GM12878 (cell line): ENCODE measurements at regions of chr10 and their contacts with region 1.

Region 1: DNA sequence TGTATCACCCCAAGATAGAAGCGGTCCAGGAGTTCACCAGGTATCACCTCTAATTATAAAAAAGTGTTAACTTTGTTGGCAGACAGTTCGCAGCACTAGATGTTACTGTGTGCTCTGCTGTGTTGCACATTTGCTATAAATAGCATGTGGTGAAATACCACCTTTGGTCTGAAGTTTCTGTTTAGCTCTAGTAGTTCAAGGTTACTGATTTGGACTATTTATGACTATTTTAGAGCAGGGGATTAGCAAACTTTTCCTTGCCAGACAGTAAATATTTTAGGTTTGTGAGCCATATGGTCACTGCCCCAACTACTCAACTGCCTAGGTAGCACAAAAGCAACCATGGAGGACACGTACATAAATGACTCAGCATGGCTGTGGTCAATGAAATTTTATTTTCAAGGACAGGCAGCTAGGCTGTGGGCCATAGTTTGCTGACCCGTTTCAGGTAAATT is 16.5 kb downstream of the DENND10 start:
- DNase-seq: peak; percentile 88
- ATAC-seq: peak; percentile 95
- H3K4me3 ChIP-seq: no peak overlapping the region; the same call in 1 of the 2 replicates
- H3K27ac ChIP-seq: peak overlapping the region; percentile 43
- H3K4me1 ChIP-seq: peaks cover 16% of the 10 kb centered on the region
- H3K27me3 ChIP-seq: no peaks in the 10 kb centered on the region
- CTCF ChIP-seq: no peak
- EP300 ChIP-seq: peak; percentile 66 to 74; a peak in 3 of 4 replicates
- POLR2A ChIP-seq: no peak
- RAD21 ChIP-seq: no peak

Region 2: GRCh38 chr10:118522791-118523498 is 597.5 kb before region 1 on chr10:
- CTCF ChIA-PET with region 1: no interaction called
- POLR2A ChIA-PET with region 1: no interaction called
- RAD21 ChIA-PET with region 1: no interaction called
- SMC1A ChIA-PET with region 1: no interaction called
- in situ Hi-C with region 1: no loop called
- intact Hi-C with region 1: no loop called
- DNase-seq: no peak
- ATAC-seq: no peak
- H3K4me3 ChIP-seq: no peak overlapping the region
- H3K27ac ChIP-seq: no peak overlapping the region
- H3K4me1 ChIP-seq: no peaks in the 10 kb centered on the region
- H3K27me3 ChIP-seq: no peaks in the 10 kb centered on the region
- CTCF ChIP-seq: no peak
- EP300 ChIP-seq: no peak
- POLR2A ChIP-seq: no peak
- RAD21 ChIP-seq: no peak

Region 3: DNA sequence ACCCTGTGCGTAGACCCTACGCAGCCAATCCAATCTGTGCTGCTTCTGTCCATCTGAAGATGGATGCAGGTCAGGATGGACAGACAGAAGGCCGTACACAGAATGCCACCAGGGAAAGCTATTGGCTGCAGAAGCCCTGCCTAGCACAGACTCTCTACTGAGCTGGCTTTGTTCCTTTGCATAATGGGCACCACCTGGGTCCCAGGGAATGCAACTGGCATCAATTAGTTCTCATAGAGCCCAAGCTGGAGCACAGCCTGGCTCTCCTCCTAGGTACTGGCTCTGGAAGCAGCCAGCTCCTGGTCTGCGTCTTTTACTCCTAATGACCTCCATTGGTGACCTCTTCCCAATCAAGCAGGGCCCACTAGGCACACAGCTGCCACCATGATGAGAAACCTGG is 338.9 kb before region 1 on chr10:
- CTCF ChIA-PET with region 1: no interaction called
- POLR2A ChIA-PET with region 1: no interaction called
- RAD21 ChIA-PET with region 1: no interaction called
- SMC1A ChIA-PET with region 1: no interaction called
- in situ Hi-C with region 1: no loop called
- intact Hi-C with region 1: no loop called
- DNase-seq: no peak
- ATAC-seq: no peak
- H3K4me3 ChIP-seq: no peak overlapping the region
- H3K27ac ChIP-seq: no peak overlapping the region
- H3K4me1 ChIP-seq: no peaks in the 10 kb centered on the region
- H3K27me3 ChIP-seq: no peaks in the 10 kb centered on the region
- CTCF ChIP-seq: no peak
- EP300 ChIP-seq: no peak
- POLR2A ChIP-seq: no peak
- RAD21 ChIP-seq: no peak

Region 4: GRCh38 chr10:119100811-119101238 is 19.6 kb before region 1 on chr10:
- CTCF ChIA-PET with region 1: interaction called, 7 read pairs
- POLR2A ChIA-PET with region 1: interaction called, 12 read pairs
- RAD21 ChIA-PET with region 1: interaction called, 5 read pairs
- SMC1A ChIA-PET with region 1: interaction called, 5 read pairs
- in situ Hi-C with region 1: no loop called
- intact Hi-C with region 1: no loop called
- DNase-seq: no peak
- ATAC-seq: no peak
- H3K4me3 ChIP-seq: no peak overlapping the region
- H3K27ac ChIP-seq: no peak overlapping the region
- H3K4me1 ChIP-seq: peaks cover 5% of the 10 kb centered on the region
- H3K27me3 ChIP-seq: no peaks in the 10 kb centered on the region
- CTCF ChIP-seq: no peak
- EP300 ChIP-seq: no peak
- POLR2A ChIP-seq: no peak
- RAD21 ChIP-seq: no peak

Region 5: DNA sequence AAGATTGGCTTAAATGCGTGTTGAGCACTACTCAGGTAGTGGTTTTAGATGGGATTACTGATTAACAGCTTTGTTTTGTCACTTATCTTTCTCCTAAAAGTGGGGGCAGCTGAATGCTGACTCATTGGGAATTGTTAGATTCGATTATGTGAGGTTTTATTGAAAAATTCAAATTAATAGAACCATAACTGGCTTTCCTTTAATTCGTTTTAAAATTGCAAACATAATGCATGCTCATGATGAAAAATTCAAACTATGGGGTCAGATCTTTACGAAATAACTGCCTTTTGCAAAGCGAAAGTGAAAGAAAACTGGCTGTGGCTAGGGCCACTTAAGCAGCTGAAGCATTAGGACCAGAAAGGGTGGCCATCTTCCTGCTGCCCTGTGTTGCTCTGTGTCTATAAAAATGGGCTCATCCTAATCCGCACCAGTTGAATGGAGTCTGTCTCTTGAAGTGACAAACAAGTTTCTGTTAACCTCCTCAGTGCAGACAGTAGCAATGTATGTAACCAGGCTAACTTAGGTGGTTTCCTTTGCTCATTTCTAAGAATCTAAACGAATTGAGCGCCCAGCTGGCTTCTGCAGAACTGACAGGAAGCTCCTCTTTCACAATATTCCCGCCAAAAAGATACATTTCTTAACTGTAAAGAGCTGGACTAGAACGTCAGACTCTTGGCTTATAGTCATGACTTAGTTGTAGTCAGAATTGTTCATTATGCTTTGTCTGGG is 11.2 kb after region 1 on chr10:
- CTCF ChIA-PET with region 1: interaction called, 4 read pairs
- POLR2A ChIA-PET with region 1: interaction called, 3 read pairs
- RAD21 ChIA-PET with region 1: interaction called, 13 read pairs
- SMC1A ChIA-PET with region 1: interaction called, 7 read pairs
- in situ Hi-C with region 1: no loop called
- intact Hi-C with region 1: no loop called
- DNase-seq: peak; percentile 45
- ATAC-seq: peak; percentile 94
- H3K4me3 ChIP-seq: peak overlapping the region; percentile 24
- H3K27ac ChIP-seq: peak overlapping the region; percentile 76
- H3K4me1 ChIP-seq: peaks cover 14% of the 10 kb centered on the region
- H3K27me3 ChIP-seq: no peaks in the 10 kb centered on the region
- CTCF ChIP-seq: no peak
- EP300 ChIP-seq: no peak
- POLR2A ChIP-seq: peak; percentile 61
- RAD21 ChIP-seq: no peak

Region 6: DNA sequence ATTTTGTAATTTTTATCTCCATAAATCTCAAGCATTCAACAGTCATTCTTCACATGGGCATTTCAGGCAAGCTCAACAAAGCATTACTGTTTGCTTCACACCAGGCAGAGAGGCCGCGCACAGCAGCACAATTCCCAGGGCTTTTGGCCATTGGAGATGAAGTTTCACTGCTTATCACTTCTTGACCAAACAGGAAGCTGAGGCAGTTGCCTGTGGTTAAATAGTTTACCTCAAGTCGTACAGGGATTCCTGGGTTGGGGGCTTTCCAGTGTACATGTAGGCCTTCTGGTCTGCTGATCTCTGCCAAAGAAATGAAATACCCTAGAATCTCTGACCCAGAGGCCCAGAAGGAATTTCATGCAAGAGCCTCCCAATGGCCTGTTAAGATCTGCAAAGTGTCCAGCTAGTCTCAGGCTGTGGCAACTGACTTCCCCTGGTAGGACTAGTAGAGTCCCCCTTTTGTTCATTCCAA is 69.4 kb after region 1 on chr10:
- CTCF ChIA-PET with region 1: no interaction called
- POLR2A ChIA-PET with region 1: no interaction called
- RAD21 ChIA-PET with region 1: no interaction called
- SMC1A ChIA-PET with region 1: no interaction called
- in situ Hi-C with region 1: no loop called
- intact Hi-C with region 1: no loop called
- DNase-seq: no peak
- ATAC-seq: peak; percentile 88
- H3K4me3 ChIP-seq: no peak overlapping the region
- H3K27ac ChIP-seq: no peak overlapping the region
- H3K4me1 ChIP-seq: peaks cover 14% of the 10 kb centered on the region
- H3K27me3 ChIP-seq: no peaks in the 10 kb centered on the region
- CTCF ChIP-seq: no peak
- EP300 ChIP-seq: no peak
- POLR2A ChIP-seq: no peak
- RAD21 ChIP-seq: no peak